Right cardiac atrium (tissue), 5 donors: ENCODE measurements at regions of chr3 and their contacts with region 1.

Region 1: DNA sequence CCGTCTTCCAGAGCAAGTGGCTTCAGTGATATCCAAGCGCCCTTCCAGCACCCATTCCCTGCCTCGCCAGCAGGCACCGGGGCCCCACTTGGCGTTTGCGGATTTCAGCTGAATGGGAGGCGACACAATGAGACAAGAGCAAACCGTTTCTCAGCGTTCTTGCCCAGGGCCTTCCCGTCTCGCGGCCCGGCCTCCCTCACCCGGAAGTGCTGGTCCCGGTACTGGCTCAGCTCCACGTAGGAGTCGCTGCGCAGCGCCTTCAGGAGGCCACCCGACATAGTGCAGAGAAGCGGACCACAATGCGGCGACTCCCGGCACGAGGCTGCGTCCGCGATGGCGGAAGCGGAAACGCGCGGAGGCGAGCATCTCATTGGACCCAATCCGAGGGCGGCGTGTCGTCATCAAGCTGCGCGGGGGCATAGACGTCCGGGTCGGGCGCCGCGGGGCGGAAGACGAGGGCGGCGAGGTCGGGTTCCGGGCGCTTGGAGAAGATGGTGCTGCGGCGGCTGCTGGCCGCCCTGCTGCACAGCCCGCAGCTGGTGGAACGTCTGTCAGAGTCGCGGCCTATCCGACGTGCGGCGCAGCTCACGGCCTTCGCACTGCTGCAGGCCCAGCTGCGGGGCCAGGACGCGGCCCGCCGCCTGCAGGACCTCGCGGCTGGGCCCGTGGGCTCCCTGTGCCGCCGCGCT is at the start of gene NCBP2:
- DNase-seq: peak; percentile 99 to 100 (median 100)
- ATAC-seq: peak; percentile 96 to 97
- H3K4me3 ChIP-seq: peak within 1 kb of the TSS; percentile 91
- H3K27ac ChIP-seq: peak within 1 kb of the TSS; percentile 84
- H3K4me1 ChIP-seq: peaks cover 6% of the 10 kb centered on the region
- H3K27me3 ChIP-seq: no peaks in the 10 kb centered on the region
- total RNA-seq, gene NCBP2: 35.5 to 43.4 (median 37.0) TPM

Region 2: DNA sequence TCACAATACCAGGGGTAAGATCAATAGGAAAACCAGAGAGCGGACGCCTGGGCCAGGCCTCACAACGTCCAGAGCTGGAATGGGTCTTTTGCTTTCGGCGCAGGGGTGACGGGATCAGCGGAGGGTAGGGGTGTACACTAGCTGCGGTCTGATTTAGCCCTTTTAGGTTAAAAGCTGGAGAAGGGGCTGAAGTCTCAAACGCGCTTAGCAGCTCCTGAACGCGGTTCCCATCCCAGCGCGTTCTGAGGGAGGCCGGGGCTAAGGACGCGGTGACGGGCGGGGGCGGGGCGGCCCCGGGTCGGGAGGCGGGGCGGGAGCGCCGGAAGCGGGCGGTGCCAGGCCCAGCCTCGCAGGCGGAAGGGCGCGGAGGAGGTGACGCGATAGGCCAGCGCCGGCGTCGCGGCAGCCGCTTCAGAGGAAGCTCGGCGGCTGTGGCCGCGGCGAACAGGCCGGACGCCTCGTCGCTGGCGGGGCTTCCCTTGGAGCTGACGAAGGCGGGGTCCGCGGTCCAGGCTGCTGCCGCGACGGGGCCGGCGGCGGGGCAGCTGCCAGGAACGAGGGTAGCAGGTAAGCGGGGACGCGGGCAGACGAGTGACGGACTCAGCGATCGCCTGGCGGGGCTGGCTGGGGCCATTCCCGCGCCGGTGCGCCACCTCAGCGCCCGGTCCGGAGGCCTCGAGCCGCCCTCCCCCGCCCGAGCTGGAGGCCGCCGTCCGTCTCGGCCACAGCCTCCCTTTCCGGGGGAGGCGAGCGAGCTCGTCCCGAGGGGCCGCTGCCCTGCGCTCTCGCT is 74.7 kb before region 1 on chr3 and contains the start of gene SENP5:
- intact Hi-C with region 1: loop called in 2 of 4 experiments (anchors 5 to 10 kb)
- DNase-seq: peak; percentile 92 to 97 (median 97)
- ATAC-seq: peak; percentile 99
- H3K4me3 ChIP-seq: peak within 1 kb of the TSS; percentile 82
- H3K27ac ChIP-seq: peak within 1 kb of the TSS; percentile 94
- H3K4me1 ChIP-seq: no peaks in the 10 kb centered on the region
- H3K27me3 ChIP-seq: no peaks in the 10 kb centered on the region
- total RNA-seq, gene SENP5: 19.9 to 31.0 (median 21.7) TPM

Region 3: DNA sequence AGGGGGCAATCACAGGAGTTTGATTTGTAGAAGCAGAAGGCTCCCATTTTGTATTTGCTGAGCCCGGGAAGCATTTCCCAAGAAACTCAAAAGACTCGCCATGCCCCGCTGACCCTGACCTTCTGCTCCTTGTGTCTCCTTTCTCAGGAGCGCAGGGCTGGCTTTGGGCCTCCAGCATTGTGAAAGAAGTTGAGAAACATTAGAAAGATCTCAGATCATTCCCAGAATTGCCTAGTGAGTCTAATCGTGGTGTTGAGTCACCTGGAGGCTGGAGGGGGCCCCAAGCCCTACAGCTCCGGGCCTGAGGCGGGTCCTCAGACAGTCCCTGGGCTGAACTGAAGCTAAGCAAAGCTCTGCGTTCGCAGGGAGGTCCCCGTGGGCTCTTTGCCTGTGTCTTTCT is 37.2 kb after region 1 on chr3:
- intact Hi-C with region 1: no loop called
- DNase-seq: no peak
- ATAC-seq: no peak
- H3K4me3 ChIP-seq: no peak overlapping the region
- H3K27ac ChIP-seq: no peak overlapping the region
- H3K4me1 ChIP-seq: no peaks in the 10 kb centered on the region
- H3K27me3 ChIP-seq: no peaks in the 10 kb centered on the region